ENCODE measurements at regions of chr14 and their contacts with region 1.

Region 1: GRCh38 chr14:102986810-102987579 is 64.5 kb downstream of the AMN start:
- DNase-seq: no peak
- ATAC-seq: no peak
- H3K4me3 ChIP-seq: no peak overlapping the region
- H3K27ac ChIP-seq: no peak overlapping the region
- H3K4me1 ChIP-seq: peaks cover 15% of the 10 kb centered on the region
- H3K27me3 ChIP-seq: no peaks in the 10 kb centered on the region
- CTCF ChIP-seq: no peak
- EP300 ChIP-seq: no peak
- POLR2A ChIP-seq: no peak
- RAD21 ChIP-seq: no peak

Region 2: GRCh38 chr14:103052407-103052806 is 65.4 kb after region 1 on chr14:
- CTCF ChIA-PET with region 1: no interaction called
- POLR2A ChIA-PET with region 1: no interaction called
- RAD21 ChIA-PET with region 1: no interaction called
- SMC1A ChIA-PET with region 1: no interaction called
- in situ Hi-C with region 1: no loop called
- intact Hi-C with region 1: loop called (anchors 5 kb)
- DNase-seq: peak; percentile 53
- ATAC-seq: peak; percentile 36
- H3K4me3 ChIP-seq: peak overlapping the region; percentile 28
- H3K27ac ChIP-seq: peak overlapping the region; percentile 55
- H3K4me1 ChIP-seq: peaks cover 7% of the 10 kb centered on the region
- H3K27me3 ChIP-seq: no peaks in the 10 kb centered on the region
- CTCF ChIP-seq: no peak
- EP300 ChIP-seq: no peak
- POLR2A ChIP-seq: no peak
- RAD21 ChIP-seq: no peak

Region 3: GRCh38 chr14:103160866-103161391 is 173.9 kb after region 1 on chr14:
- CTCF ChIA-PET with region 1: no interaction called
- POLR2A ChIA-PET with region 1: no interaction called
- RAD21 ChIA-PET with region 1: no interaction called
- SMC1A ChIA-PET with region 1: no interaction called
- in situ Hi-C with region 1: no loop called
- intact Hi-C with region 1: no loop called
- DNase-seq: no peak
- ATAC-seq: no peak
- H3K4me3 ChIP-seq: no peak overlapping the region
- H3K27ac ChIP-seq: no peak overlapping the region
- H3K4me1 ChIP-seq: no peaks in the 10 kb centered on the region
- H3K27me3 ChIP-seq: peaks cover 0 to 3% of the 10 kb centered on the region in 2 experiments; a peak in 3 of 4 replicates
- CTCF ChIP-seq: no peak
- EP300 ChIP-seq: no peak
- POLR2A ChIP-seq: no peak
- RAD21 ChIP-seq: no peak